ENCODE measurements at regions of chr4 and their contacts with region 1.

Region 1: GRCh38 chr4:107902715-107903114 is 28.6 kb upstream of the CYP2U1 start:
- DNase-seq: no peak
- H3K4me3 ChIP-seq: no peak overlapping the region
- H3K27ac ChIP-seq: peak overlapping the region; percentile 63 to 83 (median 74)
- H3K4me1 ChIP-seq: peaks cover 0 to 52% (median 44%) of the 10 kb centered on the region in 4 donors
- H3K27me3 ChIP-seq: no peaks in the 10 kb centered on the region
- CTCF ChIP-seq: no peak
- EP300 ChIP-seq: no peak
- POLR2A ChIP-seq: no peak

Region 2: GRCh38 chr4:107824353-107825071 is 78.2 kb before region 1 on chr4 and contains the start of gene SGMS2:
- intact Hi-C with region 1: loop called (anchors 2 kb)
- DNase-seq: peak; percentile 95
- H3K4me3 ChIP-seq: peak within 1 kb of the TSS; percentile 80 to 92 (median 89)
- H3K27ac ChIP-seq: peak within 1 kb of the TSS; percentile 93 to 97 (median 96)
- H3K4me1 ChIP-seq: peaks cover 0 to 40% (median 32%) of the 10 kb centered on the region in 4 donors
- H3K27me3 ChIP-seq: no peaks in the 10 kb centered on the region
- CTCF ChIP-seq: no peak
- EP300 ChIP-seq: peak in 1 of 4 donors; percentile 3
- POLR2A ChIP-seq: peak; percentile 50 to 70
- total RNA-seq, gene SGMS2: 101 to 204 (median 147) TPM

Region 3: DNA sequence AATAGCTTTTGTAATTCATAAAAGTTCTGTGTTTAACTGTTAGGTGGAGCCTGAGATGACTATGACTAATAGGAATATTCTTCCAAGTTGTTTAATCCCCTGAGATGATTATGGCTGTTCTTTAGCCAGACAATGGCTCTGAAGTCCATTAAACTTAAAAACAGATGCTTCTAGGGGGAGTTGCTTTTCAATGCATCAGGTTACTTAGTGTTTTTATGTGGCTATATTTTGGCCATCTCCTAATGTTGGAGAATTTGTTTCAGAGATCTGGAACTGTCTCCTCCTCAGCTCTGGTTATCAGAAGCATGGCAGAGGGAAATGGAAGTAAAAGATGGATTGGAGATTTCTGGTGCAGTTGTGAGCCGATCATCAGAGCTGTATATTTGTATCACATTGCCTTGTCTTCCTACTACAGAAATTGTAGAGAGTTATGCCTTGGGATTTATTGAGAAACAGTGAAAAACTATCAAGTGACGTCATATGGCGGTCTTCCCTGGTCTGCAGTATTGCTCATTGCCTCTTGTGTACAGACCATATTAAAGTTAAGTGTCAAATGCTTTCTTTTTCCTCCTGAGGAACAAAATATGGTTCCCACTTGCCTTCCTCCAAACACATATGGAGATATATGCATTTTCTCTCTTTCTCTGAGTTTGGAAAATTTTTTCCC is 48.2 kb before region 1 on chr4:
- intact Hi-C with region 1: loop called (anchors 5 kb)
- DNase-seq: no peak
- H3K4me3 ChIP-seq: peak overlapping the region in 1 of 4 donors; percentile 9
- H3K27ac ChIP-seq: peak overlapping the region; percentile 40 to 69 (median 62)
- H3K4me1 ChIP-seq: peaks cover 0 to 73% (median 60%) of the 10 kb centered on the region in 4 donors
- H3K27me3 ChIP-seq: no peaks in the 10 kb centered on the region
- CTCF ChIP-seq: no peak
- EP300 ChIP-seq: no peak
- POLR2A ChIP-seq: no peak

Region 4: GRCh38 chr4:107996949-107997788 is 94.5 kb after region 1 on chr4:
- intact Hi-C with region 1: loop called (anchors 1 kb)
- DNase-seq: peak; percentile 84
- H3K4me3 ChIP-seq: no peak overlapping the region
- H3K27ac ChIP-seq: peak overlapping the region; percentile 69 to 96 (median 83)
- H3K4me1 ChIP-seq: peaks cover 0 to 66% (median 53%) of the 10 kb centered on the region in 4 donors
- H3K27me3 ChIP-seq: no peaks in the 10 kb centered on the region
- CTCF ChIP-seq: no peak
- EP300 ChIP-seq: peak; percentile 53 to 84 (median 73)
- POLR2A ChIP-seq: no peak

Measured in sigmoid colon (tissue), 7 donors.